CD8-positive, alpha-beta T cell (primary cell): ENCODE measurements at regions of chrX and their contacts with region 1.

Region 1: DNA sequence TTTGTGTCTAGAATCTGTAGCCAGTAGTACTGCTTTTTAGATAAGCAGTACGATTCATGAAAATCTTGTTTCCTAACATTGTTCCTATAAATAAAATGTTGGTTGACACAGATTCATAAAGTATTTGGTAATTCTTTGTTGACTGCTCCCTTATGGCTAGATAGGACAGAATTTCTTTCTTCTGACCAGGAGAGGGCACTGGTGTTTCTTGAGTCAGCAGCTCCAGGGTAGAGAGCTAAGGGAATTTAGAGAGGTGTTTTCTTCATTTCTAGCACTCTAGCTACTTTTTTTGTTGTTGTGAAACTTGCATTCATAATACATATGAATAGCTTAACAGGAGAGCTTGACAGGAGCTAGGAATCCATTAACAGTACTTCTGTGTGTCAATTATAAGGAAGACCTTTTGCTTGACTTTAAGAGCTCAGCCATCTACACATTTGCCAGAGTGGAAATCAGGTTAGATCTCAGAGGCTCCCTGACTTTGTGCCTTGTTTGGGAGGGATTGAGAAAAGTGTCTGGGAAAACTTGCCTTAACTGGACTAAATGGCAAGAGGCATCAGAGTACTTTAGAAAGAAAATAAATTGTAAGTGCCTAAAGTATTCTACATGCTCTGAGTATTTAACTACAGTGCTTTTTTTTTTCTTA is 756.1 kb downstream of the SH3BGRL start:
- DNase-seq: peak in 2 of 9 experiments; percentile 44 to 57
- ATAC-seq: no peak
- H3K4me3 ChIP-seq: no peak overlapping the region
- H3K4me3 Mint-ChIP-seq: no peak overlapping the region
- H3K27ac ChIP-seq: no peak overlapping the region
- H3K27ac Mint-ChIP-seq: no peak overlapping the region
- H3K4me1 ChIP-seq: no peaks in the 10 kb centered on the region
- H3K4me1 Mint-ChIP-seq: no peaks in the 10 kb centered on the region
- H3K27me3 ChIP-seq: no peaks in the 10 kb centered on the region
- H3K27me3 Mint-ChIP-seq: no peaks in the 10 kb centered on the region
- CTCF ChIP-seq: no peak

Region 2: GRCh38 chrX:80412042-80412441 is 1546.0 kb before region 1 on chrX:
- CTCF ChIA-PET with region 1: no interaction called
- POLR2A ChIA-PET with region 1: no interaction called
- intact Hi-C with region 1: no loop called
- DNase-seq: no peak
- ATAC-seq: no peak
- H3K4me3 ChIP-seq: no peak overlapping the region
- H3K4me3 Mint-ChIP-seq: no peak overlapping the region
- H3K27ac ChIP-seq: no peak overlapping the region
- H3K27ac Mint-ChIP-seq: no peak overlapping the region
- H3K4me1 ChIP-seq: no peaks in the 10 kb centered on the region
- H3K4me1 Mint-ChIP-seq: no peaks in the 10 kb centered on the region
- H3K27me3 ChIP-seq: no peaks in the 10 kb centered on the region
- H3K27me3 Mint-ChIP-seq: no peaks in the 10 kb centered on the region
- CTCF ChIP-seq: no peak

Region 3: GRCh38 chrX:82676386-82676785 is 718.4 kb after region 1 on chrX:
- CTCF ChIA-PET with region 1: no interaction called
- POLR2A ChIA-PET with region 1: no interaction called
- intact Hi-C with region 1: loop called in 1 of 2 experiments (anchors 5 kb)
- DNase-seq: peak in 2 of 9 experiments; percentile 1 to 5
- ATAC-seq: no peak
- H3K4me3 ChIP-seq: no peak overlapping the region
- H3K4me3 Mint-ChIP-seq: no peak overlapping the region
- H3K27ac ChIP-seq: no peak overlapping the region
- H3K27ac Mint-ChIP-seq: no peak overlapping the region
- H3K4me1 ChIP-seq: no peaks in the 10 kb centered on the region
- H3K4me1 Mint-ChIP-seq: no peaks in the 10 kb centered on the region
- H3K27me3 ChIP-seq: no peaks in the 10 kb centered on the region
- H3K27me3 Mint-ChIP-seq: no peaks in the 10 kb centered on the region
- CTCF ChIP-seq: no peak

Region 4: DNA sequence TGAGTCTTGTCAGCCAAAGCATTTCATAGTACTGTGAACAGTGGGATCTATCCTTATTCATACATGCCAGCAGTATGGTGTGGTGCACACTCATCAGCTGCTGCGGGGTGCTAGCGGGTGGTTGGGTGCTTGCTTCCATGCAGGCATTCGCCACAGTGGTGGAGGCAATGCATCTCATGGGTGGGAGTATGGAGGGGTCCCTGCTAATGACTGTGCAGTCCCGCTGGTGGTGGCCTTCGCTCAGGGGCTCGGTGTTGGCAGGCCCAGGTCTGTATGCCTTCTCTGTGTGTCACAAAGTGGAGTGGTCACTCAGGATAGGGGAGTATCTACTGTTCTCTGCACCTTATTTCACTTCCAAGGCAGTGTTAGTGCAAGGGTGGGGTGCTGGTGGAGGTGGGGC is 1672.6 kb after region 1 on chrX:
- CTCF ChIA-PET with region 1: no interaction called
- POLR2A ChIA-PET with region 1: no interaction called
- intact Hi-C with region 1: loop called in 1 of 2 experiments (anchors 5 kb)
- DNase-seq: no peak
- ATAC-seq: no peak
- H3K4me3 ChIP-seq: no peak overlapping the region
- H3K4me3 Mint-ChIP-seq: no peak overlapping the region
- H3K27ac ChIP-seq: no peak overlapping the region
- H3K27ac Mint-ChIP-seq: no peak overlapping the region
- H3K4me1 ChIP-seq: no peaks in the 10 kb centered on the region
- H3K4me1 Mint-ChIP-seq: no peaks in the 10 kb centered on the region
- H3K27me3 ChIP-seq: no peaks in the 10 kb centered on the region
- H3K27me3 Mint-ChIP-seq: no peaks in the 10 kb centered on the region
- CTCF ChIP-seq: no peak